ENCODE measurements at regions of chrX and their contacts with region 1.

Region 1: GRCh38 chrX:109902665-109903064 is 100.2 kb upstream of the TMEM164 start:
- DNase-seq: no peak
- H3K4me3 ChIP-seq: no peak overlapping the region
- H3K27ac ChIP-seq: no peak overlapping the region
- H3K4me1 ChIP-seq: no peaks in the 10 kb centered on the region
- H3K27me3 ChIP-seq: no peaks in the 10 kb centered on the region
- CTCF ChIP-seq: no peak
- POLR2A ChIP-seq: no peak

Region 2: GRCh38 chrX:110146521-110146920 is 243.9 kb after region 1 on chrX:
- intact Hi-C with region 1: loop called (anchors 10 kb)
- DNase-seq: peak; percentile 26
- H3K4me3 ChIP-seq: no peak overlapping the region
- H3K27ac ChIP-seq: no peak overlapping the region
- H3K4me1 ChIP-seq: no peaks in the 10 kb centered on the region
- H3K27me3 ChIP-seq: no peaks in the 10 kb centered on the region
- CTCF ChIP-seq: peak in 2 of 3 experiments; percentile 39 to 42
- POLR2A ChIP-seq: no peak

Measured in testis (tissue), 5 donors.